Left ventricle myocardium inferior (tissue), 1 donor: ENCODE measurements at regions of chr3 and their contacts with region 1.

Region 1: DNA sequence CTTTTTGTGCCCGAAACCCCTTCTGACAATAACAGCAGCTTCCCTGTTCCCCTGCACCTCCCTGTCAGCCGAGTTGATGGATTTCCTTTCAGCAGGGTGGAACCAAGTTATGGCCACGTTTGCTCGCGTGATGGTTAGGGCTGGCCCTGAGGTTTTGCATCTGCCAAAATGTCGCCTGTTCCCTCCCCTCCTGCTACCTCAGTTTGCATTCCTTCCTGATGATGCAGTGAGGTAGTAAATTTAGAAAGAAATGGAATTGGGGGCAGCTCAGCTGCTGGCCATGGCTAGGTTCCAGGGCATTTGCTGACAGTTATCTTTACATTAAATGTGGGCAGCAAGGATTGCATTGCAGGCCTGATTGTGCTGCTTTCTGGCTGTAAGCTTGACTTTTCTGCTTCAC is 13.2 kb downstream of the LIMD1 start:
- DNase-seq: peak; percentile 28
- H3K4me3 ChIP-seq: peak overlapping the region; percentile 38
- H3K27ac ChIP-seq: peak overlapping the region; percentile 93
- H3K4me1 ChIP-seq: peaks cover 100% of the 10 kb centered on the region
- H3K27me3 ChIP-seq: no peaks in the 10 kb centered on the region
- CTCF ChIP-seq: no peak

Region 2: DNA sequence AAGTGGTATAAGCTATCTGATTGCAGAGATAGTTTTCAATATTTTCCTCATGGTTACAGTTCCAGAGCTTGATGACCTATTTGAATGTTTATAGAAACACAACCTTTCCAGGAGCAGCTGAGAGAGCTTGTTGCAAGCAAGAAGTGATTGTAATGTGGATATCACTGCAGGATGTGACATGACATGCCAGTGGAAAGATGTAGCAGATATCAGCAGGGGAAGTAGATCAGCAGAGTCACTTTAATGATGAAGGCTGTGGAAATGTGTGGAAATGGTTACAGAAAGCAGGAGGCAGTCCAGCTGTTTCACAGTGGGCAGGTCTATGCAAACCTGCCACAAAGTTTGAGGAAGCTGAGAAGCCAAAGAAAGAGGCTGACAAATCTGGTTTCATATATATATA is 402.7 kb before region 1 on chr3:
- intact Hi-C with region 1: loop called (anchors 5 kb)
- DNase-seq: no peak
- H3K4me3 ChIP-seq: no peak overlapping the region
- H3K27ac ChIP-seq: no peak overlapping the region
- H3K4me1 ChIP-seq: peaks cover 3% of the 10 kb centered on the region
- H3K27me3 ChIP-seq: peaks cover 10% of the 10 kb centered on the region
- CTCF ChIP-seq: no peak

Region 3: GRCh38 chr3:45507820-45508317 is 99.9 kb before region 1 on chr3:
- intact Hi-C with region 1: no loop called
- DNase-seq: peak; percentile 32
- H3K4me3 ChIP-seq: no peak overlapping the region
- H3K27ac ChIP-seq: peak overlapping the region; percentile 55
- H3K4me1 ChIP-seq: peaks cover 21% of the 10 kb centered on the region
- H3K27me3 ChIP-seq: no peaks in the 10 kb centered on the region
- CTCF ChIP-seq: peak; percentile 57

Region 4: DNA sequence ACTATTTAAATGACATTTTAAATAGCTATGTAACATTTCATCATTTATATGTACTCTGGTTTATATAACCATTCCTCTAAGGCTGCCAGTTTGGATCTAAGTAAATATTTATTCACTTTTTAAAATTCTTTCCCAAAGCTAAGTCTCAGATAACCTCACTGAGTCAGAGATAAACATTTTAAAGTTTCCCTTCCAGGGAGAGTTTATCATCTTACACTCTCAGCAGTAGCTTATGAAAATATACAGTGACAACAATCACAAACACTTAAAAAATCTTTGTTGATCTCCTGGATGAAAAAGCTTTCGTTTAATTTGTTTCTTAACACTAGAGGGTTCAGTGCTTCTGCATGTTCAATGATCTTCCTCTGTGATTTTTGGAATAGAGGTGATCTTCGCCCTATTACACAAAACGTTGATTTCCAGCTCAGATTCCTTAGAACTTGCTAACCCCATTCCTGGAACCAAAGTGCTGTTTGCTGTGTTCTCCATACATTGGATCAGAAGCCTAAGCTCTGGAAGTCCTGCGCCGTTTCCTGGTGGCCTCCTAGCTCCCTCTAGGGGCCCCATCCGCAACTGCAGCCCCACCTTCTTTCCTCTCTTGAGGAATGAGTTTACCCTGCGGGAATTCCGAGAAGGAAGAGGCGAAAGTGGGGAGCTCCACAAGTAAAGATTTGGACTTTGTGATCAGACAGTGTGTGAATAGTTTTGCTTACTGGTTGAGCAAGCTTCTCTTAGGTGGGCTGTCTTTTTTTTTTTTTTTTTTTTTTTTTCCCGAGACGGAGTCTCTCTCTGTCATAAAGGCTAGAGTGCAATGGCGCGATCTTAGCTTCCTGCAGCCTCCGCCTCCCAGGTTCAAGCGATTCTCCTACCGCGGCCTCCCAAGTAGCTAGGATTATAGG is 52.1 kb after region 1 on chr3:
- intact Hi-C with region 1: no loop called
- DNase-seq: peak; percentile 74
- H3K4me3 ChIP-seq: peak overlapping the region; percentile 36
- H3K27ac ChIP-seq: peak overlapping the region; percentile 3
- H3K4me1 ChIP-seq: peaks cover 45% of the 10 kb centered on the region
- H3K27me3 ChIP-seq: no peaks in the 10 kb centered on the region
- CTCF ChIP-seq: peak; percentile 96